ENCODE measurements at regions of chr3 and their contacts with region 1.

Region 1: GRCh38 chr3:11201246-11202024 is 47.1 kb downstream of the HRH1 start:
- DNase-seq: no peak
- ATAC-seq: no peak
- H3K4me3 Mint-ChIP-seq: no peak overlapping the region
- H3K27ac Mint-ChIP-seq: no peak overlapping the region
- H3K4me1 Mint-ChIP-seq: peaks cover 5% of the 10 kb centered on the region
- H3K27me3 Mint-ChIP-seq: peaks cover 22% of the 10 kb centered on the region

Region 2: GRCh38 chr3:10292505-10293419 is 908.7 kb before region 1 on chr3 and contains the start of gene GHRL:
- CTCF ChIA-PET with region 1: no interaction called
- POLR2A ChIA-PET with region 1: no interaction called
- intact Hi-C with region 1: no loop called
- DNase-seq: no peak
- ATAC-seq: peak; percentile 47
- H3K4me3 Mint-ChIP-seq: no peak within 1 kb of the TSS
- H3K27ac Mint-ChIP-seq: peak within 1 kb of the TSS; percentile 55
- H3K4me1 Mint-ChIP-seq: peaks cover 8% of the 10 kb centered on the region
- H3K27me3 Mint-ChIP-seq: no peaks in the 10 kb centered on the region
- total RNA-seq, gene GHRL: 0.19 to 0.30 TPM

Region 3: DNA sequence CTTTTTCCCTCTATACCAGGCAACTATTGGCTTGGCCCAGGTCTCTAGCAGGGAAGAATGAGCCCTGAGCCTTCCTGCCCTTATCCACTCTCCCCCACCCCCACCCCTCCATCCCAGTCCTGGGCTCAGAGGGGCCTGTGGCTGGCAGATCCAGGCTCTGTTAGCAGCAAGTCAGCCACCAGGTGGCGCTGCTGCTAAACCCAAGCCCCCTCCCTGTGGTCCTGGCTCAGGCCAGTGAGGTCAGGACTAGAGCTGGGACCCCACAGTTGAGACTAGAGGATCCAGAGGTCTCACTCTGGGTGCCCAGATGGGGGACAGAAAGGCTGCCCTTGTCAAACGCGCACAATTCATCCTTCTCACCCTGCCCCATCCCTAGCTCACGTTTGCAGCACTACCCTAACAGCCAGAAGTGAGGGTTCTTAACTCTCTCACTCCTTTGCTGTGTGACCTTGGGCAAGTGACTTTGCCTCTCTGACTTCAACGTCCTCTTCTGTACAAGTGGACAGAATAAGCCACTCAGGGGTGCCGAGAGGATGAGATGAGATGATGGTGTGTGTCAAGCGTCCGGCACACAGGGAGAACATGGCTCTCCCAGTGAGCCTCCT is 255.7 kb before region 1 on chr3:
- CTCF ChIA-PET with region 1: interaction called, 4 read pairs
- POLR2A ChIA-PET with region 1: no interaction called
- intact Hi-C with region 1: loop called in 1 of 2 experiments (anchors 10 kb)
- DNase-seq: peak; percentile 79
- ATAC-seq: peak; percentile 83
- H3K4me3 Mint-ChIP-seq: no peak overlapping the region
- H3K27ac Mint-ChIP-seq: no peak overlapping the region
- H3K4me1 Mint-ChIP-seq: no peaks in the 10 kb centered on the region
- H3K27me3 Mint-ChIP-seq: peaks cover 5% of the 10 kb centered on the region

Measured in activated CD4-positive, alpha-beta T cell treated with anti-CD3 and anti-CD28 coated beads for 36 hours (primary cell).